ENCODE measurements at regions of chr3 and their contacts with region 1.

Region 1: DNA sequence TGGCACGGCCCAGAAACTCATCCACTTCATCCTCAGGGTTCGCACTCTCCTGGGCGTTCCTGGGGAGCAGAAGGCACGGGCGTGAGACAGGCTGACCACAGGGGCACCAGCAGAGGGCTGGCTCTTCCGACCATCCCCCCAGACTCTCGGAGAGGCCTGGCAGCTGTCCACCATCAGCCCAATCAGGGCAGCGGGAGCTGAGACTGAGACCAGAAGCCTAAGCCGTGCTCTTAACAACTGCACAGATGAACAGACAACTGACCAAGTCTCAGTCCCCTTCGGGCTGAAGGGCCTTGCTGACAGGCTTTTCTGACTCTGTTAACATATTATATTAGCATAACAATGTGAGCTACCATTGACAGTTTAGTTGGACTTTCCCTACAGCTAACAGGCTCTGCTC is 118.0 kb downstream of the SEC22A start:
- DNase-seq: no peak
- H3K4me3 ChIP-seq: no peak overlapping the region
- H3K27ac ChIP-seq: no peak overlapping the region
- H3K4me1 ChIP-seq: no peaks in the 10 kb centered on the region
- H3K27me3 ChIP-seq: peaks cover 26% of the 10 kb centered on the region
- CTCF ChIP-seq: no peak

Region 2: DNA sequence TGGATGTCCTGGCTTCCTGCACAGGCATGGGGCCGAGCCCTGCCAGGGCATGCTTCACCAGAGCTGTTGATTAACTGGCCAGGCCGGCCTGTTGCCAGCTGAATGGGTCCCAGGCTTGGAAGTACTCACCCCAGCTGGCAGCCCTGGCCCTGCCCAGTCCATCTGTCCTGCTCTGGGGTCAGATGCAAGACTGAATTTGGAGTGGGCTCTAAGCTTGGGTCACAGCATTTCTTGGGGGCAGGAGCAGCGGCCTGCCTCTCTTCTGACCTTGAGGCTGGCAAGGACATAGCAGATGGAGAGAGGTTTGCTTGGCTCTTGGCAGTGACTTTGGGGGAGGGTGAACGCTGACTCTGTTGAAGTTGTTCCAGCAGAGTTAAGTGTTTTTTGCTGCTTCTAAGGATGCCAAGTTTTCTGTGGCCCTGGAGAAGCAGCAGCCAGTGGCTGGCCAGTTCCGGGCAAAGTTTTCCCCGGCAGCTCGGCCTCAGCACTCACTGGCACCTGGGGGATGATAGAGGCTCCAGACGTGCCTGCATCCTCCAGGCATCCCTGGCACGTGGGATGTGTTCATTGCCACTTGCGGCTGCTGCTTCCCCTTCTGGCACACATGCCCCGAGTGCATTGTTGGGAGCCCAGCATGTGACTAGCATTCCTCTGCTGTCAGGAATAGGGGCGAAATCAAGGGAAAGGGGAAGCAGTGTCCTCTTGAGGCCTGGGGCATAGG is 230.0 kb before region 1 on chr3:
- CTCF ChIA-PET with region 1: no interaction called
- POLR2A ChIA-PET with region 1: no interaction called
- intact Hi-C with region 1: no loop called
- DNase-seq: no peak
- H3K4me3 ChIP-seq: no peak overlapping the region
- H3K27ac ChIP-seq: no peak overlapping the region
- H3K4me1 ChIP-seq: peaks cover 13% of the 10 kb centered on the region
- H3K27me3 ChIP-seq: no peaks in the 10 kb centered on the region
- CTCF ChIP-seq: no peak

Region 3: GRCh38 chr3:123286308-123287023 is 33.3 kb before region 1 on chr3:
- CTCF ChIA-PET with region 1: no interaction called
- POLR2A ChIA-PET with region 1: interaction called, 18 read pairs
- intact Hi-C with region 1: no loop called
- DNase-seq: peak; percentile 80
- H3K4me3 ChIP-seq: no peak overlapping the region
- H3K27ac ChIP-seq: no peak overlapping the region
- H3K4me1 ChIP-seq: no peaks in the 10 kb centered on the region
- H3K27me3 ChIP-seq: peaks cover under 1% of the 10 kb centered on the region
- CTCF ChIP-seq: peak; percentile 90

Region 4: GRCh38 chr3:123334056-123334455 is 14.3 kb after region 1 on chr3:
- CTCF ChIA-PET with region 1: interaction called, 11 read pairs
- POLR2A ChIA-PET with region 1: no interaction called
- intact Hi-C with region 1: no loop called
- DNase-seq: no peak
- H3K4me3 ChIP-seq: no peak overlapping the region
- H3K27ac ChIP-seq: no peak overlapping the region
- H3K4me1 ChIP-seq: no peaks in the 10 kb centered on the region
- H3K27me3 ChIP-seq: no peaks in the 10 kb centered on the region
- CTCF ChIP-seq: no peak

Measured in A673 (cell line).